ENCODE measurements at regions of chr4 and their contacts with region 1.

Region 1: GRCh38 chr4:3292571-3293400 is at the start of gene RGS12:
- DNase-seq: peak; percentile 81 to 90 (median 83)
- H3K4me3 ChIP-seq: peak within 1 kb of the TSS; percentile 84 to 86 (median 85)
- H3K4me3 Mint-ChIP-seq: peak within 1 kb of the TSS; percentile 87 to 93
- H3K27ac ChIP-seq: peak within 1 kb of the TSS; percentile 80 to 87
- H3K27ac Mint-ChIP-seq: peak within 1 kb of the TSS; percentile 80 to 95 (median 89)
- H3K4me1 ChIP-seq: peaks cover 20 to 30% of the 10 kb centered on the region in 2 donors
- H3K4me1 Mint-ChIP-seq: peaks cover 24% of the 10 kb centered on the region
- H3K27me3 ChIP-seq: peaks cover 0 to 3% of the 10 kb centered on the region in 2 donors
- H3K27me3 Mint-ChIP-seq: peaks cover 14 to 29% (median 22%) of the 10 kb centered on the region in 3 donors
- CTCF ChIP-seq: no peak
- polyA plus RNA-seq, gene RGS12: 0.75 to 15.3 (median 2.7) TPM

Region 2: GRCh38 chr4:3074078-3074795 is 218.5 kb before region 1 on chr4 and contains the starts of genes HTT and HTT-AS:
- intact Hi-C with region 1: loop called in 1 of 2 experiments (anchors 10 kb)
- DNase-seq: peak; percentile 90 to 94 (median 92)
- H3K4me3 ChIP-seq: peak within 1 kb of the TSS; percentile 73 to 95 (median 89)
- H3K4me3 Mint-ChIP-seq: peak within 1 kb of the TSS; percentile 92
- H3K27ac ChIP-seq: peak within 1 kb of the TSS; percentile 92
- H3K27ac Mint-ChIP-seq: peak within 1 kb of the TSS; percentile 89 to 99 (median 96)
- H3K4me1 ChIP-seq: peaks cover 19 to 31% of the 10 kb centered on the region in 2 donors
- H3K4me1 Mint-ChIP-seq: peaks cover 22% of the 10 kb centered on the region
- H3K27me3 ChIP-seq: no peaks in the 10 kb centered on the region
- H3K27me3 Mint-ChIP-seq: peaks cover 0 to 3% (median 0%) of the 10 kb centered on the region in 3 donors
- CTCF ChIP-seq: no peak
- polyA plus RNA-seq, gene HTT: 1.8 to 27.1 (median 3.0) TPM
- polyA plus RNA-seq, gene HTT-AS: not detected

Region 3: GRCh38 chr4:3201718-3202702 is 90.8 kb before region 1 on chr4:
- intact Hi-C with region 1: loop called in 1 of 2 experiments (anchors 2 kb)
- DNase-seq: peak; percentile 67 to 83 (median 76)
- H3K4me3 ChIP-seq: no peak overlapping the region
- H3K4me3 Mint-ChIP-seq: peak overlapping the region in 1 of 2 donors; percentile 47
- H3K27ac ChIP-seq: peak overlapping the region; percentile 25 to 82
- H3K27ac Mint-ChIP-seq: peak overlapping the region; percentile 58 to 98 (median 91)
- H3K4me1 ChIP-seq: peaks cover 21 to 25% of the 10 kb centered on the region in 2 donors
- H3K4me1 Mint-ChIP-seq: peaks cover 32% of the 10 kb centered on the region
- H3K27me3 ChIP-seq: no peaks in the 10 kb centered on the region
- H3K27me3 Mint-ChIP-seq: peaks cover 0 to 2% (median 0%) of the 10 kb centered on the region in 3 donors
- CTCF ChIP-seq: no peak

Region 4: GRCh38 chr4:3226467-3226866 is 66.3 kb before region 1 on chr4:
- intact Hi-C with region 1: loop called in 1 of 2 experiments (anchors 5 kb)
- DNase-seq: peak; percentile 81 to 92 (median 86)
- H3K4me3 ChIP-seq: peak overlapping the region in 2 of 3 experiments; percentile 24 to 66
- H3K4me3 Mint-ChIP-seq: peak overlapping the region; percentile 65 to 78
- H3K27ac ChIP-seq: peak overlapping the region; percentile 99 to 100
- H3K27ac Mint-ChIP-seq: peak overlapping the region; percentile 98 to 99 (median 99)
- H3K4me1 ChIP-seq: peaks cover 50 to 52% of the 10 kb centered on the region in 2 donors
- H3K4me1 Mint-ChIP-seq: peaks cover 47% of the 10 kb centered on the region
- H3K27me3 ChIP-seq: no peaks in the 10 kb centered on the region
- H3K27me3 Mint-ChIP-seq: peaks cover 0 to 4% (median 2%) of the 10 kb centered on the region in 3 donors
- CTCF ChIP-seq: no peak

Region 5: GRCh38 chr4:3355266-3355748 is 62.5 kb after region 1 on chr4:
- intact Hi-C with region 1: no loop called
- DNase-seq: peak; percentile 31 to 67 (median 60)
- H3K4me3 ChIP-seq: no peak overlapping the region
- H3K4me3 Mint-ChIP-seq: peak overlapping the region in 1 of 2 donors; percentile 48
- H3K27ac ChIP-seq: peak overlapping the region; percentile 38 to 45
- H3K27ac Mint-ChIP-seq: peak overlapping the region; percentile 75 to 91 (median 81)
- H3K4me1 ChIP-seq: peaks cover 11 to 21% of the 10 kb centered on the region in 2 donors
- H3K4me1 Mint-ChIP-seq: peaks cover 30% of the 10 kb centered on the region
- H3K27me3 ChIP-seq: no peaks in the 10 kb centered on the region
- H3K27me3 Mint-ChIP-seq: peaks cover 0 to 2% (median 0%) of the 10 kb centered on the region in 3 donors
- CTCF ChIP-seq: no peak

Region 6: DNA sequence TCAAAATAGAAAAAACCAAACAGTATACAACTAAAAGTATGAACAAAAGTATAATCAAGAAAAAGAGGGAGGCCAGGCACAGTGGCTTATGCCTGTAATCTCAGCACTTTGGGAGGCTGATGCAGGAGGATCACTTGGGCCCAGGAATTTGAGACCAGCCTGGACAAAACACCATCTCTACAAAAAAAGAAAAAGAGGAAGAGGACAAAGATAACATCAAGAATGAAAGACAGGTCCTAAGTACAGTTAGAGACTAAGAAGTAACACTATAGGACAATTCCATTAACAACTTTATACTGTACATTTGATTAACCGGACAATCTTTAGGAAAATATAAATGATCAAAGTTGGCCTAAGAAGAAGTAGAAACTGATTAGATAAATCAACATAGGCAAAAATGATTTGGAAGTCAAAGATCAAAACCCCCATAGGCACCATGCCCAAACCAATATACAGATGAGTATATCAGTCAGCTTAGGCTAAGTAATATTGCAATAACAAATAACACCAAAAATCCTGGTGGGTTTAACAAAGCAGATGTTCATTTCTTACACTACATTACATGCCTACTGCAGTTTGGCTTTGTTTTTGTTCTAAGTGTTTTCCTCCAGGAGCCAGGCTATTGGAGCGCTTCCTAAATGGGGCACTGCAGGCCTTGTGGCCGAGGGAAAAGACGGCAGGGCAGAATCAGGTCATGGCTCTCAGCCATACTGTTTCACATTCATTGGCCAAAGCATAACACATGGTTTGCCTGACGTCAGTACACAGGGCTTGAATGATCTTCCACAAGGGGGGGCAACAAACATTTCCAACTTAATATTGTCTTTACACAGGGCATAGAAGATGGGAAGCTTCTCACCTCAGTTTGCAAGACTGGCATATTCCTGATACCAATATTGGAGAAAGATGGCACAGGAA is 106.8 kb after region 1 on chr4:
- intact Hi-C with region 1: no loop called
- DNase-seq: no peak
- H3K4me3 ChIP-seq: no peak overlapping the region
- H3K4me3 Mint-ChIP-seq: no peak overlapping the region
- H3K27ac ChIP-seq: peak overlapping the region in 1 of 2 donors; percentile 57
- H3K27ac Mint-ChIP-seq: peak overlapping the region; percentile 25 to 91 (median 69)
- H3K4me1 ChIP-seq: peaks cover 37 to 49% of the 10 kb centered on the region in 2 donors
- H3K4me1 Mint-ChIP-seq: peaks cover 43% of the 10 kb centered on the region
- H3K27me3 ChIP-seq: no peaks in the 10 kb centered on the region
- H3K27me3 Mint-ChIP-seq: peaks cover 0 to 2% (median 0%) of the 10 kb centered on the region in 3 donors
- CTCF ChIP-seq: no peak

Region 7: GRCh38 chr4:3414028-3414780 is 121.4 kb after region 1 on chr4:
- intact Hi-C with region 1: no loop called
- DNase-seq: peak; percentile 61 to 69 (median 67)
- H3K4me3 ChIP-seq: no peak overlapping the region
- H3K4me3 Mint-ChIP-seq: peak overlapping the region in 1 of 2 donors; percentile 39
- H3K27ac ChIP-seq: peak overlapping the region in 1 of 2 donors; percentile 55
- H3K27ac Mint-ChIP-seq: peak overlapping the region in 5 of 7 donors; percentile 42 to 83 (median 52)
- H3K4me1 ChIP-seq: peaks cover 11 to 13% of the 10 kb centered on the region in 2 donors
- H3K4me1 Mint-ChIP-seq: peaks cover 10% of the 10 kb centered on the region
- H3K27me3 ChIP-seq: no peaks in the 10 kb centered on the region
- H3K27me3 Mint-ChIP-seq: peaks cover 0 to 6% (median 0%) of the 10 kb centered on the region in 3 donors
- CTCF ChIP-seq: no peak

Region 8: DNA sequence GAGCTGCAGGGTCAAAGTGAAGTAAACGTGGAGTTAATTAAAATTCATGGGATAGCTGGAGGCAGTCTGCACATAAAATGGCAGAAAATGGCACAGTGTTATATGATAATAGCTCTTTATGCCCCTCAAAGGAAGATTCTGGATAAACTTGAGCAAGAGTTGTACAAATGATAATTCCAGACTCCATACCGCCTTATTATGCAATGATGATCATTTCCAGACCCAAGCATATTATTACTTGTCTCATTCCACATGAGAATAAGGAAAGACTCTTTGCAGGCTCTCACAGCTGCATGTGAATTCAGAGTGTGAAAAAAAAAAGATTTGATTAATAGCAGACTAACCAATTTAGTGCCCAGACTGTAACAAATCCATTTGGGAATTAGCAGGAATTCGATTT is 1863.9 kb after region 1 on chr4:
- intact Hi-C with region 1: no loop called
- DNase-seq: no peak
- H3K4me3 ChIP-seq: no peak overlapping the region
- H3K4me3 Mint-ChIP-seq: no peak overlapping the region
- H3K27ac ChIP-seq: no peak overlapping the region
- H3K27ac Mint-ChIP-seq: no peak overlapping the region
- H3K4me1 ChIP-seq: no peaks in the 10 kb centered on the region
- H3K4me1 Mint-ChIP-seq: no peaks in the 10 kb centered on the region
- H3K27me3 ChIP-seq: no peaks in the 10 kb centered on the region
- H3K27me3 Mint-ChIP-seq: peaks cover 0 to 4% (median 0%) of the 10 kb centered on the region in 3 donors
- CTCF ChIP-seq: no peak

Measured in CD14-positive monocyte (primary cell).